ENCODE measurements at regions of chr6 and their contacts with region 1.

Region 1: DNA sequence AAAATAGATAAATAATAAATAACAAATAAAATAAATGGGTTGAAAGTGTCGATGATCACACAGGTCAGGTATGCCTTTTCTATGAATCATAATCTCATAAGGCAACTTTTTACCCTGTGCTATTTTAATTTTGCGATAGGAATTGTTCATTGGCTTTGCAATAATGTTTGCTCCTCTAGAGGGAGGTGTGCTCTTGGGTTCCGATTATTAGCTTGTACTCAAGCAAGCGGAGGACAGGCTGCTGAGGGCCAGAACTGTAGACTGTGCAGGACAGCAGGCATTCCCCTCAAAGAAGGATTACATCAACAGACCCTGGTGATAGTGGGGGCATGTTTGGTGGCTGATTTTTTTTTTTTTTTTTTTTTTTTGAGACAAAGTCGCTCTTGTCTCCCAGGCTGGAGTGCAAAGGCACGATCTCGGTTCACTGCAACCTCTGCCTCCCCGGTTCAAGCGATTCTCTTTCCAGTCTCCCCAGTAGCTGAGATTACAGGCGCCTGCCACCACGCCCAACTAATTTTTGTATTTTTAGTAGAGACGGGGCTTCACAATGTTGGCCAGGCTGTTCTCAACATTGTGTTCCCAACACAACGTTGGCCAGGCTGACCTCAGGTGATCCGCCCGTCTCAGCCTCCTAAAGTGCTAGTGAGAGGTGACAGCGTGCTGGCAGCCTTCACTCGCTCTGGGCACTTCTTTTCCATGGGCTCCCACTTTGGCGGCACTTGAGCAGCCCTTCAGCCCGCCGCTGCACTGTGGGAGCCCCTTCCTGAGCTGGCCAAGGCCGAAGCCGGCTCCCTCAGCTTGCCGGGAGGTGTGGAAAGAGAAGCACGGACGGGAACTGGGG is 35.6 kb downstream of the RIOK1 start:
- DNase-seq: peak; percentile 6
- H3K4me3 ChIP-seq: no peak overlapping the region
- H3K27ac ChIP-seq: no peak overlapping the region
- H3K4me1 ChIP-seq: no peaks in the 10 kb centered on the region
- H3K27me3 ChIP-seq: no peaks in the 10 kb centered on the region
- CTCF ChIP-seq: peak in 1 of 2 donors; percentile 12
- POLR2A ChIP-seq: no peak

Region 2: DNA sequence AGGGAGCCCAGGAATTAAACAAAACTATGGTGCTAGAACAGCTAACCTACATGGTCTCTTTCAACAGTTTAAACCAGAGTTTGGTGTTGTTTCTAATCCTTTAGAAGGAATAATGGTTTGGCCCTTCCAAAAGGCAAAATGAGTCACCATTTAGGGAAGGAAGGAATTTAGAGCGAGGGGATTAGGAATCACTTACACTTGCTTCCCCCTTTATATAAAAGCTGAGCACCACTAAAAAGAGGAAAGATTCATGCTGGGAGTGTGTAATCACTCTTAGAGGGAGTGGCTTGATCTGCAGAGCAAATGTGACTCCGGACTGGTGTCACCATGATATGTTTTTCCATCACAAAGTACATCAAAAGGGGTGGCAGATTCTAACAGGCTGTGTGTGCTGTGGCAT is 1168.3 kb before region 1 on chr6:
- CTCF ChIA-PET with region 1: no interaction called
- POLR2A ChIA-PET with region 1: no interaction called
- dilution Hi-C with region 1: no loop called
- intact Hi-C with region 1: loop called (anchors 10 kb)
- DNase-seq: no peak
- H3K4me3 ChIP-seq: no peak overlapping the region
- H3K27ac ChIP-seq: no peak overlapping the region
- H3K4me1 ChIP-seq: no peaks in the 10 kb centered on the region
- H3K27me3 ChIP-seq: no peaks in the 10 kb centered on the region
- CTCF ChIP-seq: no peak
- POLR2A ChIP-seq: no peak

Region 3: GRCh38 chr6:7292596-7293255 is 132.5 kb before region 1 on chr6:
- CTCF ChIA-PET with region 1: no interaction called
- POLR2A ChIA-PET with region 1: no interaction called
- dilution Hi-C with region 1: no loop called
- intact Hi-C with region 1: no loop called
- DNase-seq: no peak
- H3K4me3 ChIP-seq: no peak overlapping the region
- H3K27ac ChIP-seq: no peak overlapping the region
- H3K4me1 ChIP-seq: no peaks in the 10 kb centered on the region
- H3K27me3 ChIP-seq: no peaks in the 10 kb centered on the region
- CTCF ChIP-seq: no peak
- POLR2A ChIP-seq: no peak